ENCODE measurements at regions of chr11 and their contacts with region 1.

Region 1: DNA sequence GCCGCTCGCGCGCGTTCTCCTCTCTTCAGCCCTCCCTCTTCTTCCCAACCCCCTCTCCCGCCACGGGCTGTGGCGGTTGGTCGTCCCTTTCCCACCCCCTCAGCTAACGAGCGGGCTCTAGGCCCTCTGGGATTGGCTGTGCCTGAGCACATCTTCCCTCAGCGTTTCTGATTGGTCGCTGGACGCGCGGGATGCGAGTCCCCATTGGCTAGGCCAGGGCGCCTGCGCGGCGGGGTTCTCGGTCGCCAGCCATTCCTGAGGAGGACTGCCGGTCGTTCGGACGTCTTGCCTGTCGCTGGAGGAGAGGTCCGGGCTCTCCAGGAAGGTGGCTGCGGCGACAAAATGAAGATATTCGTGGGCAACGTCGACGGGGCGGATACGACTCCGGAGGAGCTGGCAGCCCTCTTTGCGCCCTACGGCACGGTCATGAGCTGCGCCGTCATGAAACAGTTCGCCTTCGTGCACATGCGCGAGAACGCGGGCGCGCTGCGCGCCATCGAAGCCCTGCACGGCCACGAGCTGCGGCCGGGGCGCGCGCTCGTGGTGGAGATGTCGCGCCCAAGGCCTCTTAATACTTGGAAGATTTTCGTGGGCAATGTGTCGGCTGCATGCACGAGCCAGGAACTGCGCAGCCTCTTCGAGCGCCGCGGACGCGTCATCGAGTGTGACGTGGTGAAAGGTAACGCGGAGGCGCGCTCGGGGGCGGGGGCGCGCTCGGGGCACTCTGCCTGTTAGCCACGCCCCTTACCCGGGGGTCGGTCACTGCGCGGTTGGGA is at the start of gene RBM14:
- DNase-seq: peak; percentile 97
- ATAC-seq: peak; percentile 88
- H3K4me3 Mint-ChIP-seq: peak within 1 kb of the TSS; percentile 98
- H3K27ac Mint-ChIP-seq: peak within 1 kb of the TSS; percentile 99
- H3K4me1 Mint-ChIP-seq: peaks cover 63% of the 10 kb centered on the region
- H3K27me3 Mint-ChIP-seq: no peaks in the 10 kb centered on the region
- CTCF ChIP-seq: no peak
- total RNA-seq, gene RBM14: 147 and 160 TPM in 2 replicates

Region 2: DNA sequence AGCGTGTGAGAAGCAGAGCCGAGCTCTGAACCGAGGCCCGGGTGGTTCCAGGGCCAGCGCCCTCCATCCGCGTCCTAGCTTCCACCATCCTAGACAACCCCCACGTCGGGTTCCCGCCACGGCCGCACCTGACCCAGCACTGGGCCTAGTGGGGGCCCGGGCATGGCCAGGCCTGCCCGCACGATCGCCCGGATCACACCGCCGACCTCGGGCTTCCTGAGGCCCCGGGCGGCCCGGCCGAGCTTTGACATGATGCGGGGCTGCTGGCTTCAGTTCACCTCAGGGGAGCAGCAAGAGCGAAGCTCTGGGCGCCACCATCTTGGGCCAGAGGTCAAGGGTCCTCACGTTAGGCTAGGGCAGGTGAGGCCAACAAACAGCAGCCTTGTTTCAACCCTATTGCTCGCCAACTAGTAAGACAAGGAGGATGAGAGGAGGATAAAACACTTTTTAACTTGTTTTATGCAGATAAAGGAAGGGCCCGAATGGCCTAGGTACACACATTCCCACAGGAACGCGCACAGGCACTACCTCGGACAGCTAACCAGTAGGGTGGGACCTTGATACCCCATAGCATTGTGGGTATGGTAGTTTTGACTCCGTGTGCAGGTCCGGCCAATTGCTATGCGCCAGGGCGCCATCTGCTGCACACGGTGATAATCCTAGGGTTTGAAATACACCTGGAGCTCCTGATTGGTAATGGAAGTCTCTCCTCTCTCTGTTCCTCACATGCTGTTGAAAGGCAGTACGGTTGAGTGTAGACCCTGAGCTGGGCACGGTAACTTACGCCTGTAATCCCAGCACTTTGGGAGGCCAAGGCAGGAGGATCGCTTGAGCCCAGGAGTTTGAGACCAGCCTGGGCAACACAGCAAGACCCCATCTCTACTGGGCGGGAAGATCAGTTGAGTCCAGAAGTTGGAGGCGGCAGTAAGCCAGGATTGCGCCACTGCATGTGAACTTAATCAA is 177.8 kb before region 1 on chr11 and contains the start of gene MRPL11:
- CTCF ChIA-PET with region 1: no interaction called
- POLR2A ChIA-PET with region 1: no interaction called
- intact Hi-C with region 1: loop called (anchors 5 kb)
- DNase-seq: peak; percentile 78
- ATAC-seq: peak; percentile 98
- H3K4me3 Mint-ChIP-seq: peak within 1 kb of the TSS; percentile 87
- H3K27ac Mint-ChIP-seq: peak within 1 kb of the TSS; percentile 97
- H3K4me1 Mint-ChIP-seq: peaks cover 8% of the 10 kb centered on the region
- H3K27me3 Mint-ChIP-seq: peaks cover 4% of the 10 kb centered on the region
- CTCF ChIP-seq: no peak
- total RNA-seq, gene MRPL11: 62.6 and 74.3 TPM in 2 replicates

Region 3: DNA sequence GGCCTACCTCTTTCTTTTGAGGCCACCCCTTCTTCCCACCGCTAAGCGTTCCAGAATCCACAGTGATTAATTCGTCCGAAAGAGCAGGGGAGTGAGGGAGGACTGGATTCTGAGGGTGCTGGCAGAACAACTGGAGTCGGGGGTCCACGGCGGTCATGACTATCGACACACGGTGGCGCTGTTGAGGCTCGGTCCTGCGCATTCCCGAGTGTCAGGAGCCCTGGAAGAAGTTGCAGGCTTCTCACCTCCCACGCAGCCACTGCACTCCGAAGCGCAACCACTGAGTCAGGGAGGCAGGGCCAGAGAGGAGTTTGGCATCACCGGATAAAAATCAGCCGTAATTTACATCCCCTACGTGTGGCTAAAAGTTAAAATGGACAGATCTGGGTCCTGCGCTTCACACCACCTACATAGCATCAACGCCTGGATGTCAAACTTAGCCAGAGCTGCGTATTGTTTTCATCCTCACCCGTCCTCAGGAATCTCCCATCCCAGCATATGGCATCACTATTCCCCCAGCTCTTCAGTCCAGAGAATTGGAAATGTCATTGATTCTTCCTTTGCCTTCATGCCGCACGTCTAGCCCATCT is 37.5 kb before region 1 on chr11:
- CTCF ChIA-PET with region 1: interaction called, 5 read pairs
- POLR2A ChIA-PET with region 1: interaction called, 5 read pairs
- intact Hi-C with region 1: loop called (anchors 1 kb)
- DNase-seq: peak; percentile 76
- ATAC-seq: peak; percentile 88
- H3K4me3 Mint-ChIP-seq: no peak overlapping the region
- H3K27ac Mint-ChIP-seq: no peak overlapping the region
- H3K4me1 Mint-ChIP-seq: peaks cover 7% of the 10 kb centered on the region
- H3K27me3 Mint-ChIP-seq: peaks cover 13% of the 10 kb centered on the region
- CTCF ChIP-seq: peak; percentile 42

Region 4: GRCh38 chr11:66600631-66601233 is 15.8 kb before region 1 on chr11:
- CTCF ChIA-PET with region 1: no interaction called
- POLR2A ChIA-PET with region 1: interaction called, 72 read pairs
- intact Hi-C with region 1: no loop called
- DNase-seq: no peak
- ATAC-seq: no peak
- H3K4me3 Mint-ChIP-seq: peak overlapping the region; percentile 2
- H3K27ac Mint-ChIP-seq: peak overlapping the region; percentile 32
- H3K4me1 Mint-ChIP-seq: peaks cover 25% of the 10 kb centered on the region
- H3K27me3 Mint-ChIP-seq: no peaks in the 10 kb centered on the region
- CTCF ChIP-seq: no peak

Region 5: DNA sequence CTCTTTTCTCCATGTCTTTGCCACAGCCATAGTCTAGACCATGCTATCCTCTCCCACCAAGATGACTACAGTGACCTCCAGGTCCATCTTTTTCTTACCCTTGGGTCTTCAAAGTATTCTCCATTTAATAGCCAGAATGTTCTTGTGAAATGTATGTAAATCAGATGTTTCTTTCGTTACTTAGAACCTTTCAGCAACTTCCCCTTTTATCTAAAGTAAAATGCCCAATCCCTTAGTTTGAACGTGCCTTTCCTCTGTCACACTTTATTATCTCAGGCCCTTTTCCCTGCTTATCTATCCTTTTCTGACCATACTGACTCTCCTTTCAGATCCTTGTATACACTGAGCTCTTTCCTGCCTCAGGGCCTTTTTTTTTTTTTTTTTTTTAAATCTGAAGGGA is 43.2 kb after region 1 on chr11:
- CTCF ChIA-PET with region 1: no interaction called
- POLR2A ChIA-PET with region 1: interaction called, 12 read pairs
- intact Hi-C with region 1: no loop called
- DNase-seq: no peak
- ATAC-seq: peak; percentile 57
- H3K4me3 Mint-ChIP-seq: peak overlapping the region; percentile 55
- H3K27ac Mint-ChIP-seq: peak overlapping the region; percentile 74
- H3K4me1 Mint-ChIP-seq: peaks cover 39% of the 10 kb centered on the region
- H3K27me3 Mint-ChIP-seq: no peaks in the 10 kb centered on the region
- CTCF ChIP-seq: no peak

Region 6: GRCh38 chr11:66744485-66745340 is 128.1 kb after region 1 on chr11:
- CTCF ChIA-PET with region 1: no interaction called
- POLR2A ChIA-PET with region 1: no interaction called
- intact Hi-C with region 1: no loop called
- DNase-seq: peak; percentile 95
- ATAC-seq: peak; percentile 90
- H3K4me3 Mint-ChIP-seq: peak overlapping the region; percentile 96
- H3K27ac Mint-ChIP-seq: peak overlapping the region; percentile 89
- H3K4me1 Mint-ChIP-seq: peaks cover 26% of the 10 kb centered on the region
- H3K27me3 Mint-ChIP-seq: no peaks in the 10 kb centered on the region
- CTCF ChIP-seq: no peak

Region 7: DNA sequence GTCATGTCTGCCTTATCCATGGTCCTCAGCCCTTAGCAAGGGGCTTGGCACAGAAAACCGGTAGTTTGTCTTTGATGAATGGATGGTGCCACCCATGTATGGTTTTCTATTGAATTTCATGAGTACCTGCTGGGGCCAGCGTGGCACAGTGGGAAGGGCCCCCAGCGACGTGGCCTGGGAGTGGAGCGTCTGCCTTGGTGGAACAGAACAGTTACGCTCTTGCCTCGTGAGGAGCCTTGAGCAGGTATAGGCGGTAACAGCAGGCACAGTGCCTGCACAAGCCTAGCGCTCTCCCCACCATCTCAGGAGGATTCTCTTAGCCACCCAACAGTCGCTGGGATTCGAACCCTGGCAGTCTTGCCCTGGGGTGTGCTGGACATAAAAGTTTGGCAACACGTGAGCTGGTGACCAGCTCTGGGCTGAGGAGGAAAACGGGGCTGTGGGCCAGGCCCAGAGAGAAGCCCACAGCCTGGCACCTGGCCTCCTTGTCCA is 683.7 kb after region 1 on chr11:
- CTCF ChIA-PET with region 1: no interaction called
- POLR2A ChIA-PET with region 1: no interaction called
- intact Hi-C with region 1: no loop called
- DNase-seq: no peak
- ATAC-seq: no peak
- H3K4me3 Mint-ChIP-seq: no peak overlapping the region
- H3K27ac Mint-ChIP-seq: no peak overlapping the region
- H3K4me1 Mint-ChIP-seq: peaks cover 3% of the 10 kb centered on the region
- H3K27me3 Mint-ChIP-seq: no peaks in the 10 kb centered on the region
- CTCF ChIP-seq: no peak

Measured in activated B cell treated with CpG ODN at 0.5 μM for 24 hours (primary cell).